Posterior vena cava (tissue), 2 donors: ENCODE measurements at regions of chr1 and their contacts with region 1.

Region 1: DNA sequence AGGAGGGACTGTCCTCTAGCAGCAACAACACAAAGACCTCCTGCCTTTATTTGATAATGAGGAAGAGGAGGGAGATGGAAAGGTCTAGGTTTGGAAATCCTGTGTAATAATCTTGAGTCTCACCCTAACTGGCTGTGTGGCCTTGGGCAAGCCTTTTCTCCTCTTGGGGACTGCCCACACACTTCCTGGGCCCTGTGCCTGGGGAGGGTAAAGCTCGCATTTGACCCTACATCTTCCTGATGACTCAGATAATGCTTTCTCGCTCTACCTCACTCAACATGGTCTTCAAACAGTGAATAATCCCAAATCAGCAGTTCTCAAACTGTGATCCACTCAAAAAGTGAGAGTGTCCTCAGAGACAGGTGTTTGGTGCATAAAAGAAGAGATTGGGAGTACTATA is 81.2 kb downstream of the VWA5B1 start:
- DNase-seq: no peak

Region 2: GRCh38 chr1:20329793-20330542 is 41.9 kb before region 1 on chr1:
- intact Hi-C with region 1: loop called in 1 of 2 experiments (anchors 1 kb)
- DNase-seq: peak; percentile 26